Body of pancreas (tissue), 4 donors: ENCODE measurements at regions of chr12 and their contacts with region 1.

Region 1: DNA sequence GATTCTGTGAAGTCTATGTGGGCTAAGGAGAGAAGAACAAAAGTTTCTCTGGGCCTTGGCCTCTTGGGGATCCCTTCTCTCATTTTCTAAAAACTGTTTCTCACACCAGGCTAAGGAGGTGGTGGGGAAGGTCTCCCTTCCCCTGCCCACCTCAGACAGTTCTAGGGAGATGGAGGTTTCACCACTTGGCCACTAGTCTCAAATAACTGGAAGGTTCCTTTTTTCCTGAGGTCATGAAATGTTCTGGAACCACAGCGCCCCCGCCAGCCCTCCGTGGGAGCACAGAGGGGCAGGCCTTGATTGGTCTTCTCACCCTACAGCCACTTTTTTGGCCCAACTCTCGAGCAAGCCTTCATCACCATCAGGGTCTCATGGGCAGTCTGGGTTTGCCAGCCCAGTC is 12.6 kb downstream of the C12orf43 start:
- DNase-seq: peak in 3 of 4 donors; percentile 30 to 50 (median 44)
- ATAC-seq: no peak
- H3K4me3 ChIP-seq: no peak overlapping the region
- H3K27ac ChIP-seq: no peak overlapping the region
- H3K4me1 ChIP-seq: peaks cover 15% of the 10 kb centered on the region
- H3K27me3 ChIP-seq: no peaks in the 10 kb centered on the region
- CTCF ChIP-seq: peak in 4 of 7 experiments; percentile 26 to 44 (median 40)
- POLR2A ChIP-seq: no peak

Region 2: DNA sequence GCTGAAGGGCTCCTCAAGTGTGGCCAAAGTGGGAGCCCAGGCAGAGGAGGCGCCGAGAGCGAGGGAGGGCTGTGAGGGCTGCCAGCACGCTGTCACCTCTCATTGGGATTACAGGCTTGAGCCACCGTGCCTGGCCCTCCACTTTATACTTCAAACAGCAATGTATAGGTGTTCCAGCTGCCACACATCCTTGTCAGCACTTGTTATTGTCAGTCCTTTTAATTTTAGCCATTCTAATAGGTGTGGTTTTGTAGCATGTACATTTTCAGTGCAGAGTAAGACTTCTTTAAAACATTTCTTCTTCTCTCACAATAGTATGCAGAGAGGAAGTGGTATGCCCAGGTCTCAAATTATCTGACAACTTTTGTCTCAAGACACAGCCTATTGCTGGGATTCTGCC is 52.8 kb before region 1 on chr12:
- intact Hi-C with region 1: loop called (anchors 5 kb)
- DNase-seq: no peak
- ATAC-seq: no peak
- H3K4me3 ChIP-seq: no peak overlapping the region
- H3K27ac ChIP-seq: no peak overlapping the region
- H3K4me1 ChIP-seq: no peaks in the 10 kb centered on the region
- H3K27me3 ChIP-seq: no peaks in the 10 kb centered on the region
- CTCF ChIP-seq: no peak
- POLR2A ChIP-seq: no peak